Right cardiac atrium (tissue), 5 donors: ENCODE measurements at regions of chr17 and their contacts with region 1.

Region 1: DNA sequence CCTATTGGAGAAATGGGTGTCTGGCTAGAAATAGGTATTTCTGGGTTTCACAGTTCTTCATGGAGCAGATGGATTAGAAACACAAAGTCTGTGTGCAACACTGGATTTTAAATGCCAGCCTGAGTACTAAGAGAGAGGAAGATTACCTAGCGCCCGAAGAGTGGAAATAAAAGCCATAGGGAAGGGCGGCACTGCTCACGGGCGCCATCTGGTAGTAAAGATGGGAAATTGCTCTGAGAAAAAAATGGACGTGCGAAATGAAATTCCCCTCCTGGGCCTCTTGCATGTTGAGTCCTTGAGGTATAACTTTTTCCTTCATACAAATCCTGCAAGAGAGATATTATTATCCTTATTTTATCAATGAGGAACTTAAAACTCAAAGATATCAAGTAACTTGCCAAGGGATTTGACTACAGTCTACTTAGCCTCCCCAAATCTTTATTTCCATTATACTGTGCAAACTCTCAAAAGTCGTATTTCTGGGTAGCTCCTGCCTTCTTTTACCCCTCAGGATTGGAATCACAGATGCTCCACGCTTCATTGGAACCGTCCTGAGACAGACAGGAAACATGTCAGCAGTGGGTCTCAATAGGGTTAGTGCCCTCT is 72.8 kb downstream of the MMD start:
- DNase-seq: peak; percentile 22 to 64 (median 53)
- ATAC-seq: peak; percentile 74 to 79
- H3K4me3 ChIP-seq: no peak overlapping the region
- H3K27ac ChIP-seq: no peak overlapping the region
- H3K4me1 ChIP-seq: no peaks in the 10 kb centered on the region
- H3K27me3 ChIP-seq: no peaks in the 10 kb centered on the region

Region 2: GRCh38 chr17:54992797-54993639 is 355.8 kb before region 1 on chr17:
- intact Hi-C with region 1: loop called in 2 of 4 experiments (anchors 5 kb)
- DNase-seq: no peak
- ATAC-seq: peak in 1 of 2 donors; percentile 31
- H3K4me3 ChIP-seq: no peak overlapping the region
- H3K27ac ChIP-seq: no peak overlapping the region
- H3K4me1 ChIP-seq: no peaks in the 10 kb centered on the region
- H3K27me3 ChIP-seq: no peaks in the 10 kb centered on the region

Region 3: GRCh38 chr17:55053855-55054254 is 295.0 kb before region 1 on chr17:
- intact Hi-C with region 1: loop called in 1 of 4 experiments (anchors 5 kb)
- DNase-seq: no peak
- ATAC-seq: no peak
- H3K4me3 ChIP-seq: no peak overlapping the region
- H3K27ac ChIP-seq: no peak overlapping the region
- H3K4me1 ChIP-seq: no peaks in the 10 kb centered on the region
- H3K27me3 ChIP-seq: no peaks in the 10 kb centered on the region

Region 4: DNA sequence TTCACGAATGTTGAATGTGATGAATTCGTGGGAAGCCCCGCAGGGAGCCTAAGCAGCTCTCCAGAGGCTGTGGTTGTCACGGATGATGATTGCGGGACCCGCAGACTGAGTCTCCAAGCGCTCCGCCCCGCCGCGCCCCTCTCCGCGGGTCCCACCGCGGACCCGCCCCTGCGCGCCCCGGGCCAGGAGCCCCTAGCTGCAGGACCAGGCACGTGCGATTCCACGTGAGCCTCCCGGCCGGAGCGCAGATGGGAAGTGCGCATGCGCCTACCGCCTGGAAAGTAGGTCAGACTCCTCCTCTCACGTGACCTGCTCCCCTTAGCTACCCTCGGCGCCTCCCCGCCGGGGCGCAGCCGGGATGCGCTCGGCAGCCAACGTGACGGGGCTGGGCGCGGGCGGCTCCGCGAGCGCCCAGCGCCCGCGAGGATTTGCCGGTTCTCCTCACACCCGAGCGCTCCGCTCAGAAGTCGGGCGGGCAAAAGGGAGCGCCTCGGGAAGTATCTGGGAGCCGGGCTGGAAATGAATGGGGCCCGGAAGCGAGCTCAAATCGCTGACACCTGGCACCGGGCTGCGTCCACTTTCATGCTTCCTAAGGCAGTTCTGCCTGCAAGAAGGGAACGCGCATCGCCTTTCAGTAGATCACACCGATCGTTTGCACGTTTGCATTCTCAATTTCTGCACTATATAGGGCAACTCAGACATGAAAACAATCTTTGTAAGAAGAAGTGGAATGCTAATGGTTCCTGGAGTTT is 110.5 kb before region 1 on chr17:
- intact Hi-C with region 1: loop called in 1 of 4 experiments (anchors 10 kb)
- DNase-seq: peak; percentile 94 to 98 (median 98)
- ATAC-seq: peak; percentile 100
- H3K4me3 ChIP-seq: peak overlapping the region; percentile 64
- H3K27ac ChIP-seq: peak overlapping the region; percentile 71
- H3K4me1 ChIP-seq: no peaks in the 10 kb centered on the region
- H3K27me3 ChIP-seq: no peaks in the 10 kb centered on the region

Region 5: DNA sequence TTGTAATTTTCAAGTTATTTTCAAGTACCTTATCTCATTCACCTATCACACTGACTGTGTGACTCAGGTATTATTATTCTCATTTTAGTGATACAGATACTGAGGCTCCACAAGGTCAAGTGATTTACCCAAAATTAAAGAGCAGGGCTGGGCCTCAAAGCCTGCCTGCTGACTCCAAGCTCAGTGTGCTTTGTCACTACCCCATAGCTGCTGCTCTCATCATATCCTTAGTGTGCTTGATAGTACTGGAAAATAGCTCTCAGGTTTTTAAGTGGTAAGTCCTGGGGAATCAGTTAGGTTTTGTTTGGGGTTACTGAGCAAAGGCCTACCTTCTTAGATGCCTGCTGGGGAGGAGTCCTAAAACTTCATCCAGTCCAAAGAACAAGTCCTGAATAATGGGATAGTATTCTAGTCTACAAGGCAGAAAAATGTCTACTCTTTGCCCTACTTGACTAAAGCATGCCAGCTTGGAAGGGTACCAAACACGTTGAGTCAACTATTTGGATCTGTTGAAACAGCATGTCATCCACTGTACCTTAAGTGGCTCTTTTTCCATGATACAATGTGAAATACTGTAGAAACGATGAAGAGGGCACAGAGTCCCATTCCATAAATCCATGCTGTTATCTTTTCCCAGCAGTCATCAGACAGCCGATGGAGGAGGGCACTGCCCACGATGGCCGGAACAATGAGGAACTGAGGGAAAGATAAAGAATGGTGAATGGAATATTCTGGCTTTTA is 62.0 kb after region 1 on chr17:
- intact Hi-C with region 1: no loop called
- DNase-seq: no peak
- ATAC-seq: peak; percentile 56 to 59
- H3K4me3 ChIP-seq: no peak overlapping the region
- H3K27ac ChIP-seq: peak overlapping the region; percentile 26
- H3K4me1 ChIP-seq: peaks cover 7% of the 10 kb centered on the region
- H3K27me3 ChIP-seq: no peaks in the 10 kb centered on the region